HCT116 (cell line): ENCODE measurements at regions of chr11 and their contacts with region 1.

Region 1: DNA sequence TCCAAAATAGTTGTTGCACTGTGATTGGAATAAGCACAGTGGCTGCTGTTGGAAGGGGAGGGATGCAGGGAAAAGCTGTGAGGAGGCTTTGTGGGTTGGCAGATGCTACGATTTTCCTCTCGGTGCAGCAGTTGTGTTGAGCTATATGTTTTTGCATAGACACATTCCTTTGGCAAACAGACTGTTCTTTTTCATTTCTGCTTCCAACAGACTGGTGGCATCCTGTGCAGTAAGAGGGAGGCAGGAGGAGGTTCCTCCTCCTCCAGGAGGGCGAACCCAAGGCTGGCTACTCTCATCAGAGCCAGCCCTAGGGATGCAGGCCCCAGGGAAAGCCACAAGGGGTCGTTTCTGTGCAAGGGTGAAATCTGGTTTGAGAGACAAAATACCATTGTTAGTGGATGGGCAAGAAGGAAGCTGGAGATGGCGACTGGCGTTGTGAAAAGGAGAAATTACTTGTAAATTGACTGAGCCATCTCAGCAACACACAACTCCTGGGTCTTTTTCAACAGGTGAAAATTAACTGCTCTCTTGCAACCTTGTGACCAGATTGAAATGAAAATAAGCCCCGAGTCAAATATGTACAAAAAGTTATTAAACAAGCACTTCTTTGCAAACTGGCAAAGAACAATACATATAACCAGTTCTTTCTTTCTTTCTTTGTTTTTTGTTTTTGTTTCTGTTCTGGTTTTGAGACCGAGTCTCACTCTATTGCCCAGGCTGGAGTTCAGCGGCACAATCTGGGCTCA is 26.5 kb upstream of the UBASH3B start:
- DNase-seq: peak; percentile 64
- ATAC-seq: peak; percentile 99
- H3K4me3 ChIP-seq: no peak overlapping the region
- H3K27ac ChIP-seq: no peak overlapping the region
- H3K4me1 ChIP-seq: peaks cover 3 to 19% of the 10 kb centered on the region in 2 experiments; a peak in 3 of 4 replicates
- H3K27me3 ChIP-seq: no peaks in the 10 kb centered on the region
- CTCF ChIP-seq: peak; percentile 90 to 95 (median 92)
- POLR2A ChIP-seq: no peak
- RAD21 ChIP-seq: peak; percentile 90

Region 2: DNA sequence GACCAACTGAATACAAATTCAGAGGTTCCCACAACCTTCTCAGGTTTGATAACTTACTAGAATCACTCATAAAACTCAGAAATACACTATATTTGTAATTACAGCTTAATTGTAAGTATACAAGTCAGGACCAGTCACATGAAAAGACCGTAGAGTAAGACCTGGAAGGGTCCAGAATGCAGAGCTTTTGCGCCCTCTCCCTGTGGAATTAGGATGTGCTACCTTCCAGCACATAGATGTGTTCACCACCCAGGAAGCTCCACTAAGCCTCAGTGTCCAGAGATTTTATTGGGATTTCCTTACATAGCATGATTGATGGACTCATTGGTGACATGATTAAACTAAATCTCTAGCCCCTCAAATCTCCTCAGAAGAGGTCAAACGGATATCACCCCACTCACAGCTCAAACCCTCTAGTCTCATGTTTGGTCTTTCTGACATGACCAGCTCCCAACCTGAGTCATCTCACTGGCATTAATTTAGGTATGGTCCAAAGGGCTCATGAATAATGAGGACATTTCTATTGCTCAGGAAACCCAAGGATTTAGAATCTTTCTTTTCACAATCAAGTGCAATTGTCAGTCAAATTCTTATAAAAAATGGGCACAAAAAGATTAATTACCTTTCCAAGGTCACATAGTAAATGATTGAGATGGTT is 50.7 kb before region 1 on chr11:
- CTCF ChIA-PET with region 1: interaction called, 14 read pairs
- POLR2A ChIA-PET with region 1: no interaction called
- RAD21 ChIA-PET with region 1: interaction called in 1 of 2 experiments, 3 read pairs
- intact Hi-C with region 1: loop called (anchors 1 kb)
- DNase-seq: no peak
- ATAC-seq: no peak
- H3K4me3 ChIP-seq: no peak overlapping the region
- H3K27ac ChIP-seq: no peak overlapping the region
- H3K4me1 ChIP-seq: peaks cover 8 to 21% of the 10 kb centered on the region in 2 experiments
- H3K27me3 ChIP-seq: no peaks in the 10 kb centered on the region
- CTCF ChIP-seq: peak in 1 of 3 experiments; percentile 23; a peak in 1 of 6 replicates
- POLR2A ChIP-seq: no peak
- RAD21 ChIP-seq: peak; percentile 40

Region 3: GRCh38 chr11:122697636-122698167 is 68.7 kb after region 1 on chr11:
- CTCF ChIA-PET with region 1: no interaction called
- POLR2A ChIA-PET with region 1: no interaction called
- RAD21 ChIA-PET with region 1: no interaction called
- intact Hi-C with region 1: no loop called
- DNase-seq: no peak
- ATAC-seq: no peak
- H3K4me3 ChIP-seq: no peak overlapping the region
- H3K27ac ChIP-seq: no peak overlapping the region
- H3K4me1 ChIP-seq: no peaks in the 10 kb centered on the region
- H3K27me3 ChIP-seq: no peaks in the 10 kb centered on the region
- CTCF ChIP-seq: no peak
- POLR2A ChIP-seq: no peak
- RAD21 ChIP-seq: no peak

Region 4: DNA sequence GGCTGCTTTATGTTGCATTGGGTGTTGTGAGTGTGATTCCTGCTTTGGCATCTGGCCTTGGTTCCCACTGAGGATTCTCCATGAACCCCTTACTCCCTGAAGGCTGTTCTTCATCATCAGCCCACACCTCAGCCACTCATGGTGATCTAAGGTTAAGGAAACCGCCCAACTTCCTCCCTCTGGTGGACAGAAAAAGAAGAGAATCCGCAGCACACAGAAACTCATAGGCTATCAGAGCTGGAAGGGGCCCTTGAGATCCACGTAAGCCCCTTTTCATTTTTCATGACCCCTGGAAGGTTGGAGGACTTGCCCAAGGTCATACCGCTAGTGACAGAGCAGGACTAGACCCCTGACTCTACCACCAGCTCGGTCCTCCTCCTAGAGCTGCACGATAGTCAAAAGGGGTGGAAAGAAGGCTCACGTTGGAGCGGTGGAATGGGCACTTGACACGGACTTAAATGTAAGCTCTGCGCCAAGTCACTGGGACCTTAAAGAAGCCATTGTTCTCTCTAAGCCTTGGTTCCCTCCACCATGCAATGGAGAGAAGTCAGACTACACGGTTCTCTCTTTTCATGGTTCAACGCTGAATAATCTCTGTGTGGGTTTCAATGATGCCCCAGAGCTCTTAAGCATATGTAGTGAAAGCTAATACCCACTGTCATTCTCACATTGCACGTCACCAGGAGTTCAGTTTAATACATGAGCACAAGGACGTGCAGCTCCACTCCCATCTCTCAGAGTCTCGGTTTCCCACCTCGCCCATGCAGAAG is 125.8 kb after region 1 on chr11:
- CTCF ChIA-PET with region 1: interaction called, 13 read pairs
- POLR2A ChIA-PET with region 1: no interaction called
- RAD21 ChIA-PET with region 1: interaction called, 4 to 5 read pairs
- intact Hi-C with region 1: loop called (anchors 1 kb)
- DNase-seq: peak; percentile 10
- ATAC-seq: peak; percentile 89
- H3K4me3 ChIP-seq: no peak overlapping the region
- H3K27ac ChIP-seq: no peak overlapping the region
- H3K4me1 ChIP-seq: 0 out of 4 replicates have a peak, but pooled peaks cover 0 to 2% of the 10 kb centered on the region in 2 experiments
- H3K27me3 ChIP-seq: no peaks in the 10 kb centered on the region
- CTCF ChIP-seq: peak; percentile 37 to 67 (median 66); a peak in 5 of 6 replicates
- POLR2A ChIP-seq: no peak
- RAD21 ChIP-seq: peak; percentile 56

Region 5: GRCh38 chr11:122781378-122782195 is 152.6 kb after region 1 on chr11:
- CTCF ChIA-PET with region 1: interaction called, 35 read pairs
- POLR2A ChIA-PET with region 1: interaction called, 5 read pairs
- RAD21 ChIA-PET with region 1: interaction called in 1 of 2 experiments, 7 read pairs
- intact Hi-C with region 1: loop called (anchors 1 kb)
- DNase-seq: peak; percentile 67
- ATAC-seq: peak; percentile 99
- H3K4me3 ChIP-seq: no peak overlapping the region
- H3K27ac ChIP-seq: no peak overlapping the region
- H3K4me1 ChIP-seq: peaks cover 0 to 6% of the 10 kb centered on the region in 2 experiments; a peak in 2 of 4 replicates
- H3K27me3 ChIP-seq: no peaks in the 10 kb centered on the region
- CTCF ChIP-seq: peak; percentile 88 to 94 (median 92)
- POLR2A ChIP-seq: no peak
- RAD21 ChIP-seq: peak; percentile 94

Region 6: GRCh38 chr11:122808478-122808869 is 179.5 kb after region 1 on chr11:
- CTCF ChIA-PET with region 1: no interaction called
- POLR2A ChIA-PET with region 1: no interaction called
- RAD21 ChIA-PET with region 1: no interaction called
- intact Hi-C with region 1: no loop called
- DNase-seq: no peak
- ATAC-seq: no peak
- H3K4me3 ChIP-seq: no peak overlapping the region
- H3K27ac ChIP-seq: no peak overlapping the region
- H3K4me1 ChIP-seq: peaks cover 0 to 18% of the 10 kb centered on the region in 2 experiments; a peak in 1 of 4 replicates
- H3K27me3 ChIP-seq: no peaks in the 10 kb centered on the region
- CTCF ChIP-seq: no peak
- POLR2A ChIP-seq: no peak
- RAD21 ChIP-seq: no peak

Region 7: GRCh38 chr11:122837528-122838346 is 208.8 kb after region 1 on chr11:
- CTCF ChIA-PET with region 1: no interaction called
- POLR2A ChIA-PET with region 1: no interaction called
- RAD21 ChIA-PET with region 1: no interaction called
- intact Hi-C with region 1: no loop called
- DNase-seq: no peak
- ATAC-seq: no peak
- H3K4me3 ChIP-seq: no peak overlapping the region
- H3K27ac ChIP-seq: no peak overlapping the region
- H3K4me1 ChIP-seq: no peaks in the 10 kb centered on the region
- H3K27me3 ChIP-seq: no peaks in the 10 kb centered on the region; the same call in 1 of the 2 replicates
- CTCF ChIP-seq: no peak
- POLR2A ChIP-seq: no peak
- RAD21 ChIP-seq: no peak

Region 8: DNA sequence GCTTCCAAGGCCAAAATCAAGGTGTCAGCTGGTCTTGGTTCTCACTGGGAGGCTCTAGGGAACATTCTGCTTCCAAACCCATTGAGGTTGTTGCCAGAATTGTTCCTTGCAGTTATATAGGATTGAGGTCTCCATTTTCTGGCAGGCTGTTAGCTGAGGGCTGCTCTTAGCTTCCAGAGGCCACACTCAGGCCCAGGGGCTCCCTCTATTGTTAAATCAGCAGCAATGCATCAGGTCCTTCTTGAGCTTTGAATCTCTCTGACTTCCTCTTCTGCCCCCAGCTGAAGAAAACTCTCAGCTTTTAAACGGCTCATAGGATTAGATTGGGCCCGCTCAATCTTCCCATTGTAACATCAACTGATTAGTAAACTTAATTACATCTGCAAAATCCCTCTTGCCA is 392.0 kb after region 1 on chr11:
- CTCF ChIA-PET with region 1: interaction called, 3 read pairs
- POLR2A ChIA-PET with region 1: no interaction called
- RAD21 ChIA-PET with region 1: no interaction called
- intact Hi-C with region 1: loop called (anchors 5 kb)
- DNase-seq: peak; percentile 33
- ATAC-seq: peak; percentile 84
- H3K4me3 ChIP-seq: no peak overlapping the region
- H3K27ac ChIP-seq: no peak overlapping the region
- H3K4me1 ChIP-seq: peaks cover 0 to 11% of the 10 kb centered on the region in 2 experiments; a peak in 2 of 4 replicates
- H3K27me3 ChIP-seq: no peaks in the 10 kb centered on the region
- CTCF ChIP-seq: peak; percentile 65 to 73 (median 73)
- POLR2A ChIP-seq: no peak
- RAD21 ChIP-seq: peak; percentile 73